Astrocyte of the cerebellum (primary cell): ENCODE measurements at regions of chr16 and their contacts with region 1.

Region 1: DNA sequence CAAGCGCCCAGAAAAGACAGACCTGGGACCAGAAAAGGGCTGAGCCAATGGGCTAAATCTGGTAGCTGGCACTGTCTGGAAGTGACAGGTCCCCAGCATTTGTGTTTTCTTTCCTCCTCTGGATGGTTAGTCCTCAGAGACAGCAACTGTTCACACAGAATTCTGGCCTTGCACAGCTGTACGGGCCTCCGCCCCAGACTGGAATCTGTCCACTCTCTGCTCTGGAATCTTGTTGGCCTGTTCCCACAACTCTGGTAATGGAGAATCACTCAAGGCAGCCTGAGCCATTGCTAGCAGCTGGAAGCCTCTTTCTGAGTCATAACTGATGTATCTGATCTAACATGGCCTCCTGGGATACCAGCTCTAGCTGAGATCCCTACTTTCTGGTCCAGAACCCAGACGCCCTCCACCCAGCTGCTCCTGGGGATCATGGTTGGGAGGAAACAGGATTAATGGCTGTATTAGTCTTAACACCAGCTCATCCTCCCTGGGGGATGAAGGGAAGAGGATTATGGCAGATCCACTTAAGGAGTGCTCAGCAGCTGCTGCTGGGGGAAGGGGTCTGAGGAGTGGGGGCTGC is 9.1 kb downstream of the ZNF668 start:
- DNase-seq: peak; percentile 84
- H3K4me3 ChIP-seq: no peak overlapping the region
- CTCF ChIP-seq: no peak

Region 2: GRCh38 chr16:31002250-31002700 is 62.7 kb before region 1 on chr16:
- in situ Hi-C with region 1: loop called (anchors 5 kb)
- DNase-seq: no peak
- H3K4me3 ChIP-seq: no peak overlapping the region
- CTCF ChIP-seq: no peak

Region 3: DNA sequence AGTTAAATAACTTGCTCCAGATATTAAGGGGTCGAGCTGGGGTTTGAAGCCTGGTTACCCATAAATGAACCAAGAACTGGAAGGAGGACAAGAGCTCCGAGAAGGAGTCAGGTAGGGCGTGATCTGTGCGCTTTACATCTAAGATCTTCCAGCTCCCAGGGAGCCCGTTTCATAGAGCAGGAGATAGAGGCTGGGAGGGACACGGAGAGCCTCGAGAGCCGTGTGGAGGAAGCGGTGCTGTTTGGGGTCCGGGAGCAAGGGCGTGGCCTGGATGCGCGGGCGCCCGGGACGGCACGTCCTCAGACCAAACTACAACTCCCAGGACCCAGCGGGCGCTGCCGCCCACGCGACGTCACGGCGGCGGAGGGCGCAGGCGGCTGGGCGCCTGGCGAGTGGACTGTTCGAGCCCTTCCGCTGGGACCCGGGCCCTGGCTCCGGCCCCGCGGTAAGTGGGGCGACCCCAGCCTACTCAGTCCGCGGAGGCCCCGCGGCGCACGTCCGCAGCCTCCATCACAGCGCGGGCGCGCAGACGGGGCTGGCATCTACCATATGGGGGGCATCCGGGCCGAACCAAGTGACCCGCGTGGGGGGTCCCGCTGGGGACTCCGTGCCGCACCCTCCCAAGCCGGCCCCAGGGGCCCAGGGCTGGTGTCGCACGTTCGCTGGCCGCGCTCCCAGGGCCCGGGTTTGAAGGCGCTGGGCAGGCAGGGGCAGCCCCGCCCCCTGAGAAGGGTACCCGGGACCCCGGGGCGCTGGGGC is 43.2 kb after region 1 on chr16 and contains the start of gene BCKDK:
- in situ Hi-C with region 1: no loop called
- DNase-seq: no peak
- H3K4me3 ChIP-seq: peak within 1 kb of the TSS; percentile 98
- CTCF ChIP-seq: no peak

Region 4: DNA sequence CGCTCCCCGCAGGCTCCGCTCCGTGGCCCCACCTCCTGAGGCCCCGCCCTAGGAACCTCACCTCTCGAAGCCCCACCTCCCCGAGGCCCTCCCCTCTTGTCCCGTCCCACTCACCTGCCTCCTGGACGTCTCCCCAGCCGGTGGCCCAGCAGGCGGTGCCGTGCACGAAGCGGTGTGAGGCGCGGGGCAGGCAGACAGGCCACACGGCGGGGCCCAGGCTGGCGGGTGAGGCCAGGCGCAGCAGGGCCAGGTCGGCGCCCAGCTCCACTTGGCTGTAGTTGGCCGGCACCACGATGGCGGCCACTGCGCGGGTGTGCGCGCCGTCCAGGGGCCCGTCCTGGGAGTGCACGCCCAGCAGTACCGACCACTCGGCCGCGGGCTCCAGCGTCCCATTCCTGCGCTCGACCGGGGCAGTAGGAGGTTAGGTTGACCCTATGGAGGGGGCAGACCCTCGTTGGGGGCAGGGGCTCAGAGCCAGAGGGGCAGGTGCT is 83.4 kb after region 1 on chr16:
- in situ Hi-C with region 1: no loop called
- DNase-seq: no peak
- H3K4me3 ChIP-seq: no peak overlapping the region
- CTCF ChIP-seq: no peak